ENCODE measurements at regions of chrX and their contacts with region 1.

Region 1: DNA sequence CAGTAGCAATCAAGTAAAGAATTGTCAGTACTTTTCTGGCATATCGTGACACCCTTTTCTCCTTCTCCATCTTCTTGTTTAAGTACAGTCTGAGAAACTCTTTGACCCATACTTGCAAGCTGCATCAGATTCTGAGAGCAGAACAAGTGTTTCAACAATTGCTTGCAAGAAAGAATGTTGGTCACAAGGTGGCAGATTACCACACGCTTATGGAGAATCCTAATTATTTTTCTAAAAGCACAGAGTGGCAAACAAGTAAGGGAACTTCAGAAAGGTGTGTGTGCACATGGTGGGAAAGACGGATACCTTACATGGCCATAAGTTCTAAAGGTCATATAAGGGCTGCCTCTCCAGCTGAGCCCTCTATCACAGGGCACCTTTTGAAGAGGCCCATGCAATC is 136.4 kb upstream of the FGF13 start:
- H3K4me3 Mint-ChIP-seq: no peak overlapping the region
- H3K27ac Mint-ChIP-seq: no peak overlapping the region
- H3K4me1 Mint-ChIP-seq: peaks cover 12% of the 10 kb centered on the region
- H3K27me3 Mint-ChIP-seq: peaks cover 5% of the 10 kb centered on the region

Region 2: GRCh38 chrX:138775517-138775916 is 72.4 kb before region 1 on chrX:
- intact Hi-C with region 1: no loop called
- H3K4me3 Mint-ChIP-seq: no peak overlapping the region
- H3K27ac Mint-ChIP-seq: no peak overlapping the region
- H3K4me1 Mint-ChIP-seq: no peaks in the 10 kb centered on the region
- H3K27me3 Mint-ChIP-seq: no peaks in the 10 kb centered on the region

Region 3: DNA sequence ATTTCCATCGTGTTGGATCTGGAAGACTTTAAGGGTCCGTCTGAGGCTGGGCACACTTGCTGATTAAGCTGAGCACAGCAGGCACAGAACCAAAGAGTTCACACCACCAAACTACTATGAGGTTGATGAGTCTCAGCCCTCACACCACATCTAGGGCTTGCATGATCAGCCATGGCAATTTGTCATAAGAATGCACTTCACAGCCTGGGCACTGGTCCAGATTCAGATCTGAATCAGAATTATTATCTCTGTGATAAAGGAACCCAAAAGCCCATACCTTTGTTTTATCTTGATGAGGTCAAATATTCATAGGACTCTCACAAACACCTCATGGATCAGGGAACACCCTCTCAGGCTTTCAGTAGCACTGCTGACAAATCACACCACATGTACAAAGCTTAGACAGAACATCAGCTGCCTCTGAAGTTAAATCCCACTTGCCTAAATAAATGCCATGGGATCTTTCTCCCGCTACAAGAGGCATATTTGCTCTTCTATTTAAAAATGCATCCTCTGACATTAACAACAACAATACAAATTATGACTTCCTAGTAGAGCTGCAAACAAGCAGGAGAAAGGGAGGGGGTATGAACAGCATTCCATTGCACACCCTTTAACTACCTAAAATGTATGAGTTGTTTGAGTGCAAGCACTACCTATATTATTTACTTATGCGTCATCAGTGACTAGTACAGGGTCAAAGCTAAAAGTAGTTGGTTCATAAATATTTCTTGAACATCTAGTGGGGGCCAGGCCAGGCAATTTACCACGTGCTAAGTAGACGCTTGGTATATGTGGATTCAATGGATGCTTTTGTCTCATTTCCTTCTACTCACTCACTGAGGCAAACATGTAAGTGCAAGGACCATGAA is 49.9 kb after region 1 on chrX:
- intact Hi-C with region 1: no loop called
- H3K4me3 Mint-ChIP-seq: no peak overlapping the region
- H3K27ac Mint-ChIP-seq: no peak overlapping the region
- H3K4me1 Mint-ChIP-seq: no peaks in the 10 kb centered on the region
- H3K27me3 Mint-ChIP-seq: peaks cover 4% of the 10 kb centered on the region

Region 4: GRCh38 chrX:139172731-139173130 is 324.8 kb after region 1 on chrX:
- intact Hi-C with region 1: no loop called
- H3K4me3 Mint-ChIP-seq: no peak overlapping the region
- H3K27ac Mint-ChIP-seq: no peak overlapping the region
- H3K4me1 Mint-ChIP-seq: no peaks in the 10 kb centered on the region
- H3K27me3 Mint-ChIP-seq: peaks cover 7% of the 10 kb centered on the region

Region 5: GRCh38 chrX:139204898-139205667 is 357.2 kb after region 1 on chrX:
- intact Hi-C with region 1: loop called (anchors 10 kb)
- H3K4me3 Mint-ChIP-seq: peak overlapping the region; percentile 77
- H3K27ac Mint-ChIP-seq: peak overlapping the region; percentile 81
- H3K4me1 Mint-ChIP-seq: peaks cover 23% of the 10 kb centered on the region
- H3K27me3 Mint-ChIP-seq: peaks cover 65% of the 10 kb centered on the region

Measured in dendritic cell treated with granulocyte-macrophage colony-stimulating factor and Interleukin-4, amounts not matched to agents 40 ng/mL and 50 ng/mL, for 4 days (primary cell).